ENCODE measurements at regions of chr2 and their contacts with region 1.

Region 1: DNA sequence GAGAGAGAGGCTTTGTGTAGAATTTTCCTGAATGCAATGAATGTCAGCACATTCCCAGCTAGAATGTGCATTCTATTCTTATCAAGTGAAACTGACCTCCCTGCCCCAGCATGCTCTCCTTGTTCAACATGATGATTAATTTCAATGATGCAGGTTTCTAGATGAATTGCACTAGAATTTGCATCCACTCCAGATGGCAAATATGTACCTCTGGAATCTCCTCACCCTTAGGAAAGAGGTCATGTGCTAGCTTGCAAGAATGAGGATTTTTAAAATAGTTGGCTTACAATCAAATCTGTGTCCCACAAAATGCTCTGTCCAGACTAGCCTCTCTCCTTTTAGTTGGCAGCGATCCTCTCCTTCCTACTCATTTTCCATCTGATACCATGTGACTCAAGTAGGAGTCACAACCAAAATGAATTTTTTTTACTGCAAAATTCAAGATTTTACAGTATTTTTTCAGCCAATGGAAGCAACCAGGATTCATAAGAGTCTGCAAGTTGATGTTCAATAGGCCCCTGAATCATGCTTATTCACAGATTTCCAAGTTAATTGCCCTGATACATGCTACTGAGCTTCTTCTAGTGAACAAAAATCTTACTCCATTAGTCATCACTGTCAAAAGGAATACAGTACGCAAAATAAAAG is 21.0 kb upstream of the STAT4 start:
- DNase-seq: peak; percentile 48
- ATAC-seq: peak; percentile 56
- H3K4me3 Mint-ChIP-seq: no peak overlapping the region
- H3K27ac Mint-ChIP-seq: peak overlapping the region; percentile 60
- H3K4me1 Mint-ChIP-seq: peaks cover 78% of the 10 kb centered on the region
- H3K27me3 Mint-ChIP-seq: no peaks in the 10 kb centered on the region

Region 2: DNA sequence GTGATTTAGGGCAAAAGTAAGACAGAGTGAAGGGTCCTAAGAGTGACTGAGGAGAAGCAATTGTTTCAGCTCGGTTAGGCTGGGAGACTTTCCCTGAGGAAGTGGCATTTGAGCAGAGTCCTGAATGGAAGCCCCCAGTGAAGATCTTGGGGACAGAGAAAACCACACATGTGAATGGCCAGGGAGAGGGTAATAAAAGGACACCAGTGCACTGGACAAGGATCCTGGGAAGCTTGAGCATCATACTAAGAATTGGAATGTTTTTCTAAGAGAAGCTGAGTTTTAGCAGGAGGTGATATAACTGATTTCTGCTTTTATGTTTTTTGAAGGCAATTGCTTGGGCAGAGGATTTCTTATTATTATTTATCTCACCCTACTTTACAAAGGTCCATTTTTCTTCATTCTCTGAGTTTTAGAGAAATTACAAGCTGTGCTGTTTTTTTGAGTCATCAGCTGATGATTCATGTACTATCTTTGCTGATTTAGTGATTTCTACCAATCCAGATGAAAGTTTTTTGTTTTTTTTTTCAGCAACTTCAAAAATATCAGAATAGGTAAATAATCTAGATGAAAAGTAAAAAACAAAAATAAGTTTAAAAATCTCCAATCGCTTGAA is 720.2 kb before region 1 on chr2:
- CTCF ChIA-PET with region 1: no interaction called
- POLR2A ChIA-PET with region 1: no interaction called
- intact Hi-C with region 1: no loop called
- DNase-seq: no peak
- ATAC-seq: peak; percentile 49
- H3K4me3 Mint-ChIP-seq: no peak overlapping the region
- H3K27ac Mint-ChIP-seq: peak overlapping the region; percentile 49
- H3K4me1 Mint-ChIP-seq: peaks cover 31% of the 10 kb centered on the region
- H3K27me3 Mint-ChIP-seq: no peaks in the 10 kb centered on the region

Region 3: GRCh38 chr2:191189112-191189635 is 17.3 kb after region 1 on chr2:
- CTCF ChIA-PET with region 1: interaction called, 15 read pairs
- POLR2A ChIA-PET with region 1: interaction called, 11 read pairs
- intact Hi-C with region 1: loop called (anchors 1 kb)
- DNase-seq: no peak
- ATAC-seq: no peak
- H3K4me3 Mint-ChIP-seq: peak overlapping the region; percentile 19
- H3K27ac Mint-ChIP-seq: peak overlapping the region; percentile 68
- H3K4me1 Mint-ChIP-seq: peaks cover 63% of the 10 kb centered on the region
- H3K27me3 Mint-ChIP-seq: no peaks in the 10 kb centered on the region

Region 4: GRCh38 chr2:191195021-191195420 is 23.2 kb after region 1 on chr2:
- CTCF ChIA-PET with region 1: interaction called, 15 read pairs
- POLR2A ChIA-PET with region 1: interaction called, 11 read pairs
- intact Hi-C with region 1: loop called (anchors 1 kb)
- DNase-seq: no peak
- ATAC-seq: no peak
- H3K4me3 Mint-ChIP-seq: no peak overlapping the region
- H3K27ac Mint-ChIP-seq: peak overlapping the region; percentile 98
- H3K4me1 Mint-ChIP-seq: peaks cover 57% of the 10 kb centered on the region
- H3K27me3 Mint-ChIP-seq: no peaks in the 10 kb centered on the region

Region 5: GRCh38 chr2:191245046-191245868 is 73.4 kb after region 1 on chr2 and contains the start of gene MYO1B:
- CTCF ChIA-PET with region 1: interaction called, 5 read pairs
- POLR2A ChIA-PET with region 1: no interaction called
- intact Hi-C with region 1: loop called (anchors 2 to 5 kb)
- DNase-seq: peak; percentile 81
- ATAC-seq: peak; percentile 84
- H3K4me3 Mint-ChIP-seq: peak within 1 kb of the TSS; percentile 79
- H3K27ac Mint-ChIP-seq: peak within 1 kb of the TSS; percentile 80
- H3K4me1 Mint-ChIP-seq: peaks cover 20% of the 10 kb centered on the region
- H3K27me3 Mint-ChIP-seq: peaks cover 20% of the 10 kb centered on the region
- total RNA-seq, gene MYO1B: 29.7 to 36.7 TPM

Measured in activated CD4-positive, alpha-beta T cell treated with anti-CD3 and anti-CD28 coated beads for 36 hours (primary cell).